ENCODE measurements at regions of chr15 and their contacts with region 1.

Region 1: GRCh38 chr15:84833447-84834228 is 16.5 kb downstream of the ALPK3 start:
- DNase-seq: no peak
- H3K4me3 ChIP-seq: no peak overlapping the region
- H3K27ac ChIP-seq: no peak overlapping the region
- H3K4me1 ChIP-seq: no peaks in the 10 kb centered on the region
- H3K27me3 ChIP-seq: no peaks in the 10 kb centered on the region
- CTCF ChIP-seq: no peak
- EP300 ChIP-seq: no peak
- POLR2A ChIP-seq: no peak
- RAD21 ChIP-seq: no peak

Region 2: DNA sequence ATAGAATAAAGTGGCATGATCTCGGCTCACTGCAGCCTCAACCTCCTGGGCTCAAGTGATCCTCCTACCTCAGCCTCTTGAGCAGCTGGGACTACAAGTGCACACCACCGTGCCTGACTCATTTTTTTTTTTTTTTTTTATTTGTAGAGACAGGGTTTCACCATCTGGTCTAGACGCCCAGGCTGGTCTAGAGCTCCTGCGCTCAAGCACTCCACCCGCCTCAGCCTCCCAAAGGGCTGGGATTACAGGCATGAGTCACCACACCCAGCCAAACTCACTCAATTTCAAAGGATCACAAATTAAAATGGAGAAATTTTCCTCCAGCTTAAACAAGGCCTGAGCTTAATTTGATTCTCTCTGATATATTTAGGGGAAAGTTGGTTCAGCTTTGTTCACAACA is 148.3 kb before region 1 on chr15:
- CTCF ChIA-PET with region 1: no interaction called
- POLR2A ChIA-PET with region 1: no interaction called
- DNase-seq: no peak
- H3K4me3 ChIP-seq: no peak overlapping the region
- H3K27ac ChIP-seq: no peak overlapping the region
- H3K4me1 ChIP-seq: no peaks in the 10 kb centered on the region
- H3K27me3 ChIP-seq: no peaks in the 10 kb centered on the region
- CTCF ChIP-seq: no peak
- EP300 ChIP-seq: no peak
- POLR2A ChIP-seq: no peak
- RAD21 ChIP-seq: no peak

Region 3: GRCh38 chr15:84716036-84716799 is 117.4 kb before region 1 on chr15 and contains the start of gene SEC11A:
- CTCF ChIA-PET with region 1: no interaction called
- POLR2A ChIA-PET with region 1: no interaction called
- DNase-seq: peak; percentile 78 to 97
- H3K4me3 ChIP-seq: peak within 1 kb of the TSS; percentile 88 to 95 (median 90)
- H3K27ac ChIP-seq: peak within 1 kb of the TSS; percentile 85
- H3K4me1 ChIP-seq: peaks cover 0 to 8% (median 1%) of the 10 kb centered on the region in 4 experiments; a peak in 3 of 7 replicates
- H3K27me3 ChIP-seq: no peaks in the 10 kb centered on the region
- CTCF ChIP-seq: no peak
- EP300 ChIP-seq: no peak
- POLR2A ChIP-seq: peak; percentile 82 to 96
- RAD21 ChIP-seq: no peak
- total RNA-seq, gene SEC11A: 250 and 268 TPM in 2 replicates

Region 4: DNA sequence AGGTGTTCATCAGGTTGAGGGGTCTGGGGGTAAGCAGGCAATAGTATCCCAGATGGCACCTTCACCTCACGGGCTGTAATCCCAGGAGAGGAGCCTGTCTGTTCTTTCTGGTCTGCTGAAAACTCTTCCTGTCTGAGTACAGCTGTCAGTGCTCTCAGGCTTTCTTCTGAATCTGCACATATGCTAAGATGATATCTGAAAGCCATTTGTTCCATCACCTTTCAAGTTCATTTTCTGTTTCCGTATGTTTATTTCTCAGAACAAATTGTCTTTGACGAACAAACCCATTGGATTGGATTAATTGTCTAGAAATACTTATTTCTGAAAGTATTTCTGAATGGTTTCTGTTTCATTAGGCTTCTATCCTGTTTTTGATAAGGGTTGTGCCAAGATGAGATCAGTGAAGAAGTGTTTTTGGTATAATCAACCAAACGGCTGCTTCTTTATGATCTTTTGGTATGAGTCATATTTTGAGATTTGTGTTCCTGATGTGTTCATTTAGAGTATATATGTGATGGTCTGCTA is 72.0 kb before region 1 on chr15:
- CTCF ChIA-PET with region 1: no interaction called
- POLR2A ChIA-PET with region 1: no interaction called
- DNase-seq: no peak
- H3K4me3 ChIP-seq: no peak overlapping the region
- H3K27ac ChIP-seq: no peak overlapping the region
- H3K4me1 ChIP-seq: no peaks in the 10 kb centered on the region
- H3K27me3 ChIP-seq: no peaks in the 10 kb centered on the region
- CTCF ChIP-seq: no peak
- EP300 ChIP-seq: no peak
- POLR2A ChIP-seq: no peak
- RAD21 ChIP-seq: no peak

Region 5: DNA sequence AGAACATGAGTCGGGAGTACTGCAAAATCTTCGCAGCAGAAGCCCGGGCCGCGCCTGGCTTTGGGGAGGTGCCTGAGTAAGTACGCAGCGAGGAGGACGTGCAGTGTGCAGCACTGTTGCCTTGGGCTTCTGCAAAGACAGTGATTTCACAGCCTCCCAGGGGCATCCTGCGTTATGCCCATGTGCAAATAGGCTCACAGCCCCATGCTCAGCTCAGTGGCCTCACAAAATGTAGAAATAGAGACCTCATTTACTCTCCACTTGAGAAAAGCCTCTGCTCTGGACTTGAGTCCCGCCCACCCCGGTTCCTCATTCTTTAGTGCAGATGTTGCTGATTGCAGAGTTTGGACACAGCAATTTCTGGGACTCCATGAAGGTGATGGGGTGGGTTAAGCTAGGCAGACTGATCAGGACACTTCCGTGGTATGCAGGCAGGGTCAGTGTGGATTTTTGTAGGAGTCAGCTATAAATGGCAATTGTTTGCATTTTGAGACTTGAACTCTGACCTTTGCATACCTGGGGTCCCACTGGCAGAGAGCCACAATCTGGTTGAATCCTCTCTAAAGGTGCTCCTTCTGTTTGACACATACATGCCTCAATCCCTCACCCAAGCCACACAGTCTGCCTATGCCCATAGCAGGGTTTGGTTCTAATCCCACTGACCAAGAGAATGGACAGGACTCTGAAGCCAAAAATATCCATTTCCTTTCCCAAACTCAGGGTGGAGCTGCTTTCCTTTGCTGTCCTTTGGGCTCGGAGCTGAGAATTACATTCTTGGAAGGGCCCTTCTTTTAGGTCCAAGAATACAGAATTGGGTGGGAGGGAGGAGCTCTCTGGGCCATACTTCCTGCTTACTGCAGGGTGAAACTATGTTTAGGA is 30.2 kb after region 1 on chr15:
- CTCF ChIA-PET with region 1: interaction called, 14 read pairs
- POLR2A ChIA-PET with region 1: interaction called, 4 read pairs
- DNase-seq: no peak
- H3K4me3 ChIP-seq: no peak overlapping the region
- H3K27ac ChIP-seq: no peak overlapping the region
- H3K4me1 ChIP-seq: no peaks in the 10 kb centered on the region
- H3K27me3 ChIP-seq: no peaks in the 10 kb centered on the region
- CTCF ChIP-seq: peak in 2 of 3 experiments; percentile 21 to 25; a peak in 3 of 4 replicates
- EP300 ChIP-seq: no peak
- POLR2A ChIP-seq: no peak
- RAD21 ChIP-seq: peak; percentile 34 to 47; a peak in 3 of 4 replicates

Region 6: GRCh38 chr15:84894442-84895361 is 61.1 kb after region 1 on chr15:
- CTCF ChIA-PET with region 1: no interaction called
- POLR2A ChIA-PET with region 1: no interaction called
- DNase-seq: no peak
- H3K4me3 ChIP-seq: no peak overlapping the region
- H3K27ac ChIP-seq: no peak overlapping the region
- H3K4me1 ChIP-seq: no peaks in the 10 kb centered on the region; a peak in 2 of 7 replicates
- H3K27me3 ChIP-seq: 0 out of 7 replicates have a peak, but pooled peaks cover 0 to 3% (median 0%) of the 10 kb centered on the region in 4 experiments
- CTCF ChIP-seq: no peak
- EP300 ChIP-seq: no peak
- POLR2A ChIP-seq: no peak
- RAD21 ChIP-seq: no peak

Measured in H1 (cell line).